Posterior vena cava (tissue), 2 donors: ENCODE measurements at regions of chr5 and their contacts with region 1.

Region 1: DNA sequence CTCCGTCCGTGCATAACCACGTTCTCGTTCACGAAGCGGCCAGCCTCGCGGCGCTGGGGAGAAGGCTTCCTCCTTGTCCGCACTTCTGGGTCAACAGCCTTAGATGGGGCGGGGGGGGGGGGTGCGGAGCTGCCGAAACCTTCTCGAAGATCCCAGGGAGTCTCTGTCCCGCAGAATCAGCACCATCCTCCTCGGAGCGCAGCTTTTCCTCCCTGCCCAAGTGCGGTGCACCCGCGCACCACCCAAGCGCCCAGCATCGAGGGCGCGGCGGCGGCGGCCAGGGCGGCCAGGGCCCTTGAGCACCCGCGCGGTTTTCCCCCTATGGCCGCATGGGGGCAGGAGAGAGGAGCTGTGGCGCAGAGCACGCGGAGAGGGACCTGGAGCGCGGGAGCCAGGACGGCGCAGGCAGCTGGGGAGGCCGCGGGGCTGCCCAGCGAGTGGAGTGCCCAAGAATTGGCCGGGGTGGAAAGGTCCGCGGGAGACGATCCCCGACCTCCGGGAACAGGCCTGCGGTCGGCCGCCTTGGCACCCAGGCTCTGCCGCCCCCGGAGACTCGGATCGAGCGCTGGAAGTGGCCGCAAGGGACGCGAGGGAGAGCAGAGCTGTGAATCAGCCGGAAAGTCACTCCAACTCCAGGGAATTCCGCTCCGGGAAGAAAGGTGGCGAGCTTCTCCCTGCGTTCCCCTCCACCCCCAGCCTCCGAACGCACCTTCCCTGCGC is 43.1 kb downstream of the TMEM174 start:
- DNase-seq: peak; percentile 94

Region 2: GRCh38 chr5:73311291-73312110 is 95.5 kb after region 1 on chr5:
- intact Hi-C with region 1: no loop called
- DNase-seq: peak; percentile 91

Region 3: GRCh38 chr5:73387601-73388305 is 171.7 kb after region 1 on chr5:
- intact Hi-C with region 1: loop called in 1 of 2 experiments (anchors 10 kb)
- DNase-seq: no peak

Region 4: GRCh38 chr5:73454351-73455036 is 238.4 kb after region 1 on chr5:
- intact Hi-C with region 1: loop called in 1 of 2 experiments (anchors 5 kb)
- DNase-seq: no peak

Region 5: GRCh38 chr5:74556631-74557595 is 1340.9 kb after region 1 on chr5:
- intact Hi-C with region 1: no loop called
- DNase-seq: no peak